Activated T-helper 1 cell treated with anti-CD3 and anti-CD28 coated beads, Interleukin-12 subunit alpha, Interleukin-12 subunit beta, Interleukin-2, Interleukin-4 antibody, amounts not matched to agents 30 ng/mL and 10 ng/mL and 1 ng/mL, durations not matched to agents 14 hours and 24 hours and 36 hours (primary cell): ENCODE measurements at regions of chr1 and their contacts with region 1.

Region 1: GRCh38 chr1:225881969-225882693 is at the start of gene TMEM63A:
- DNase-seq: peak; percentile 82
- H3K4me3 Mint-ChIP-seq: peak within 1 kb of the TSS; percentile 86
- H3K27ac Mint-ChIP-seq: peak within 1 kb of the TSS; percentile 77
- H3K4me1 Mint-ChIP-seq: peaks cover 52% of the 10 kb centered on the region
- H3K27me3 Mint-ChIP-seq: peaks cover 19% of the 10 kb centered on the region
- total RNA-seq, gene TMEM63A: 20.4 and 23.4 TPM in 2 replicates

Region 2: DNA sequence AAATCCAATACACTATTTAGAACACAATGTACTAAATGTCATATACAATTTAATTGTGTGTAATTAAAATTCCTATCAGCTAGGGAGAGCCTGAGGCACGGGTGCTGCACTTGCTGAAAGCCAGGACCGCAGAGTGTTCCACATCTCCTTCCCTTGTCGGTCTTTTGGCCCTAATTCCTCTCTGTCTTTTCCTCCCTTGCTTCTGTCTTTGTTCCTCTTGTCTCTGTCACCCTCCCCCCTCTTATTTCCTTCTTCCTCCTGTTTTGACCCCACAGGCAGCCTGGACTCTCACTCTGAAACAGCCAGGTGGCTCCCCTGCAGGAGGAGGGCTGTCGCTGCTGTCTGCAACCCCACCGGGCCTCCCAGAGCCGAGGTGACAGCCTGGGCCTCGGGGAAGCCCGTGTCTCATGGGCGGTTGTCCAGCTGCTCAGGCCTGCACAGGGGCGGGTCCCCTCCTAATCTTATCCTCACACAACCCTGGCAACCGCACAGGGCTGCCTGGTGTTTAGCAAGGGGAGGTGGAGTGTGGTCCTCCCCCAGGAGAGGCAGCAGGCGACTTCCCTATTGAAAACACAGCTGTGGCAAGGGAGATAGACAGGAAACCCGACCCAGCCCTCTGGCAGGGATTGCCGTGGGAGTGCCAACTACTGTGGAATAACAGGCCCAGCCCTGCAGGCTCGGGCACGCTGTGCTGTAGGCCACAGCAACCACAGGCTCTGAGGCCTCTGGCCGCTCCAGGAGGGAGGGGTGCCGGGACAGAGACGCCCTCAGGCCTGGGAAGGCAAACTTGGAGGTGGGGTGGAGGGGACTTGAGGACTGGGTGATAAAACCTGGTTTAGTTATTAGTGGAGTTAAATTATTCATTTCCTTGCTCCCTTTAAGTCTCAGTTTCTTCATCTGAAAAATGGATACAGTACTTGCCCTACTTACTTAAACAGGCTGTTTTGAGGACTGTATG is 1378.7 kb before region 1 on chr1:
- intact Hi-C with region 1: loop called (anchors 5 kb)
- DNase-seq: no peak
- H3K4me3 Mint-ChIP-seq: peak overlapping the region; percentile 53
- H3K27ac Mint-ChIP-seq: no peak overlapping the region
- H3K4me1 Mint-ChIP-seq: peaks cover 47% of the 10 kb centered on the region
- H3K27me3 Mint-ChIP-seq: peaks cover 1% of the 10 kb centered on the region

Region 3: GRCh38 chr1:225866061-225866837 is 15.9 kb before region 1 on chr1:
- intact Hi-C with region 1: loop called (anchors 1 kb)
- DNase-seq: peak; percentile 55
- H3K4me3 Mint-ChIP-seq: peak overlapping the region; percentile 51
- H3K27ac Mint-ChIP-seq: peak overlapping the region; percentile 61
- H3K4me1 Mint-ChIP-seq: peaks cover 23% of the 10 kb centered on the region
- H3K27me3 Mint-ChIP-seq: no peaks in the 10 kb centered on the region

Region 4: DNA sequence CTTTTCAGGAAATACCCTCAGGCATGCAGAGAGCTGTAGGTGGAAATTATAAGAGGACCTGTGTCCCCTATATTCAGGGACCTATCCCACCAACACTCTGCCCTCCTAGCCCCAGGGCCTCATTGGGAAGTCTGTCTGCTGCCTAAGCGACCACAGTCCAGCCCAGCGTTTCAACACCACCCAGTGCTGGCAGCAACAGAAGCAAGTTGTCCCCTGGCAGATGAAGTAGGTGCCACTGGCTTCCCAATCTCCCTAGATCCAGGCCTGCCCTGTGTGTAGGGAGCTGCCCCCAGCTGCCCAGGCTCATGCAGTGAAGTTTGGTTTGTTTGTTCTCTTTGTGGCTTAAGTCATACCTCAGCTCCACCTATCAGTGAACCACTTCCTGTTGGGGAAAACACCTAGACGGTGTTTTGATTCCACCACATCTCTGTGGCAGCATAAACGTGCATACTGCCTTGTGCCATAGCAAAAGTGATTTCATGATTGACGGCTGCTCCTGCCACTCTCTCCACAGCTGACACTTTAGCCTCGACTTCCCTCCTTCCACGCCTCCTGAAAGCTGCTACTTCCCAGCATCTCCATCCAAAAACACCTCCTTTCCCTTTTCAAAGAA is 14.9 kb after region 1 on chr1:
- intact Hi-C with region 1: loop called (anchors 1 kb)
- DNase-seq: peak; percentile 81
- H3K4me3 Mint-ChIP-seq: peak overlapping the region; percentile 44
- H3K27ac Mint-ChIP-seq: peak overlapping the region; percentile 64
- H3K4me1 Mint-ChIP-seq: peaks cover 47% of the 10 kb centered on the region
- H3K27me3 Mint-ChIP-seq: peaks cover 42% of the 10 kb centered on the region

Region 5: GRCh38 chr1:225911191-225912130 is 29.3 kb after region 1 on chr1:
- intact Hi-C with region 1: loop called (anchors 1 kb)
- DNase-seq: peak; percentile 59
- H3K4me3 Mint-ChIP-seq: no peak overlapping the region
- H3K27ac Mint-ChIP-seq: no peak overlapping the region
- H3K4me1 Mint-ChIP-seq: peaks cover 16% of the 10 kb centered on the region
- H3K27me3 Mint-ChIP-seq: peaks cover 2% of the 10 kb centered on the region